ENCODE measurements at regions of chr20 and their contacts with region 1.

Region 1: DNA sequence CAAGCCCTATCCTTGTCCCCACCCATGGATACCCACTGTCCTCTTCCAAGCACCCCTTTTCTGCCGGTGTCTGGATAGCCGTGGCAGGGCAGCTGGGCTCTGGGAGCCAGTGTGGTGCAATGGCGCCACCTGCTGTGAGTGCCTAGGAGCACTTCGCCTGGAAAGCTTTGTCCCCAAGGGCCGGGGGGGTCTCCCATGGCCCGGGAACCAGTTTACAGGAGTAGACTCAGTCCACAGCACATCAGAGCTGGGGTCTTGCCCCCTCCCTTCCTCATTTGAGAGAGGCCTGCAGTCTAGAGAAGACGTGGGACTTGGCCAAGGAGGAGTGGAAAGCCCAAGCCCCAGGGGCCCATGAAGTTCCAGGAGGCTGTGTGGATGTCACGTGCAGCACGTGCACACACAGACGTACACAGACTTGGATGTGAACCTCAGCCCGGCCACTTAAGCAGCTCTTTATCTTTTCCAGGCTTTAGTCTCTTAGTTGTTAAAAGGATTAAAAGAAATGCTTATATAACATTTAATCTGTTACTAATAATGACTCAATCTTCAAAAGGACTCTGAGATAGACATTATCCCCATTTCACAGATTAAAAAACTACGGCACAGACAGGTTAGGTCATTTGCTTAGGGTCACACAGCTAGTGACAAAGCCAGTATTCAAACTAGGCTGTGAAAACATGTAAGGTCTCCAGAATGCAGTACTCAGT is 40.9 kb upstream of the CDH22 start:
- DNase-seq: peak; percentile 48
- H3K4me3 ChIP-seq: no peak overlapping the region
- H3K27ac ChIP-seq: no peak overlapping the region
- H3K4me1 ChIP-seq: peaks cover 9% of the 10 kb centered on the region
- H3K27me3 ChIP-seq: peaks cover 1 to 4% of the 10 kb centered on the region in 2 experiments
- CTCF ChIP-seq: peak; percentile 74 to 87
- POLR2A ChIP-seq: no peak

Region 2: GRCh38 chr20:46013826-46014516 is 335.2 kb before region 1 on chr20:
- CTCF ChIA-PET with region 1: interaction called, 18 read pairs
- POLR2A ChIA-PET with region 1: no interaction called
- dilution Hi-C with region 1: no loop called
- intact Hi-C with region 1: no loop called
- DNase-seq: peak; percentile 31
- H3K4me3 ChIP-seq: no peak overlapping the region
- H3K27ac ChIP-seq: no peak overlapping the region
- H3K4me1 ChIP-seq: no peaks in the 10 kb centered on the region
- H3K27me3 ChIP-seq: peaks cover 39 to 46% of the 10 kb centered on the region in 2 experiments
- CTCF ChIP-seq: peak; percentile 74 to 85
- POLR2A ChIP-seq: no peak

Region 3: DNA sequence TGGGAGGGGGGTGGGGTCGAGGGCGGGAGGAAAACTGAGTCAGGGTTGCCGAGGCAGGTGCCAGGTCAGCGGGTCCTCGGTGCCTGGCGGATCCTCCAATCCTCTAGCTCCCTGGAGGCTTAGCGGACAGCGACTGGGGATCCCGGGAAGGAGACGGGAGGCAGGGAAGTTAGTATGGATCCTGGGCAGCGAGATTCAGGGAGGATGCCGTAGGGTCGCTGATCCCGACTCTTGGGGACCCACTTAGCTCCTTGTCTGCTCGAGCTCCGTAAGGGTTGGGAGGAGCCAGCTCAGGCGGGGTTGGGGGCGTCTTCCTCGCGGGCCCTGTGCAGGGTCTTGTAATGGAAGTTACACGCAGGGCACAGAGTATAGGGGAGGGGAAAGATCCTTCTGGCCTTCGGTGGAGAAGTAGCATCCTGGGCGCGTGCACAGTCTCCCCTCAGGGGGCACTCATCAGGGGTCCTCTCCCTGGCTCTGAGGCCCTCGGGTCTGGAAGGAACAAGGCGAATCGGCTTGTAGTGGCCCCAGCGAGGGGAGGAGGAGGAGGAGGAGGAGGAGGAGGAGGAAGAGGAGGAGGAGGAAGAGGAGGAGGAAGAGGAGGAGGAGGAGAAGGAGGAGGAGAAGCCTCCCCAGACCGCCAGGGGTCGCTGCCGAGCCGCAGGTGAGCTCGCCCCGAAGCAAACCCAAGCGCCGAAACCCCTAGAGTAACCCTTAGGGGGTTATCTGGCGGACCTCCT is 326.6 kb before region 1 on chr20:
- CTCF ChIA-PET with region 1: interaction called, 10 read pairs
- POLR2A ChIA-PET with region 1: interaction called, 3 read pairs
- dilution Hi-C with region 1: no loop called
- intact Hi-C with region 1: loop called (anchors 2 kb)
- DNase-seq: no peak
- H3K4me3 ChIP-seq: no peak overlapping the region
- H3K27ac ChIP-seq: no peak overlapping the region
- H3K4me1 ChIP-seq: no peaks in the 10 kb centered on the region
- H3K27me3 ChIP-seq: peaks cover 10 to 22% of the 10 kb centered on the region in 2 experiments
- CTCF ChIP-seq: peak; percentile 53 to 77
- POLR2A ChIP-seq: no peak

Region 4: DNA sequence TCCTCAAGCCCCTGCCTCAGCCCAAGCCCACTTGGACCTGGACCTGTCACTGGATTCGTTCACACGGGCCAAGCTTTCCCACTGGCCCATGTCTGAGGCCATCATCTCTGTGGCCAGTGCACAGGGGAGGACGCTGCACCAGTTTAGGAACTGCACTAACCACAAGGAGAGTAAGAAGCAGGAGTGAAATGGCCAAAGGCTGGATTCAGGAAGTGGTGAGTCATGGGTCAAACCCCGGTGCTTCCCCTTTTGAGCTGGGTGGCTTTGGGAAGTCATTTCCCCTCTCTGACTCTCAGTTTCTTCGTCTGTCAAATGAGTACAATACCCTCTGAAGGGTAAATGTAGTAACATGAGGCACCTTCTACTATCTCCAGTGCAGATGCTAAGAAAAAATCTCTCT is 143.2 kb before region 1 on chr20:
- CTCF ChIA-PET with region 1: no interaction called
- POLR2A ChIA-PET with region 1: no interaction called
- dilution Hi-C with region 1: no loop called
- intact Hi-C with region 1: loop called (anchors 5 kb)
- DNase-seq: peak; percentile 47
- H3K4me3 ChIP-seq: no peak overlapping the region
- H3K27ac ChIP-seq: no peak overlapping the region
- H3K4me1 ChIP-seq: peaks cover 15% of the 10 kb centered on the region
- H3K27me3 ChIP-seq: peaks cover 11 to 16% of the 10 kb centered on the region in 2 experiments
- CTCF ChIP-seq: no peak
- POLR2A ChIP-seq: no peak

Region 5: GRCh38 chr20:46363800-46364634 is 14.8 kb after region 1 on chr20:
- CTCF ChIA-PET with region 1: interaction called, 8 read pairs
- POLR2A ChIA-PET with region 1: no interaction called
- dilution Hi-C with region 1: no loop called
- intact Hi-C with region 1: loop called (anchors 1 kb)
- DNase-seq: peak; percentile 88
- H3K4me3 ChIP-seq: peak overlapping the region; percentile 49 to 90 (median 67)
- H3K27ac ChIP-seq: peak overlapping the region; percentile 94
- H3K4me1 ChIP-seq: peaks cover 8% of the 10 kb centered on the region
- H3K27me3 ChIP-seq: no peaks in the 10 kb centered on the region
- CTCF ChIP-seq: no peak
- POLR2A ChIP-seq: peak; percentile 68

Region 6: DNA sequence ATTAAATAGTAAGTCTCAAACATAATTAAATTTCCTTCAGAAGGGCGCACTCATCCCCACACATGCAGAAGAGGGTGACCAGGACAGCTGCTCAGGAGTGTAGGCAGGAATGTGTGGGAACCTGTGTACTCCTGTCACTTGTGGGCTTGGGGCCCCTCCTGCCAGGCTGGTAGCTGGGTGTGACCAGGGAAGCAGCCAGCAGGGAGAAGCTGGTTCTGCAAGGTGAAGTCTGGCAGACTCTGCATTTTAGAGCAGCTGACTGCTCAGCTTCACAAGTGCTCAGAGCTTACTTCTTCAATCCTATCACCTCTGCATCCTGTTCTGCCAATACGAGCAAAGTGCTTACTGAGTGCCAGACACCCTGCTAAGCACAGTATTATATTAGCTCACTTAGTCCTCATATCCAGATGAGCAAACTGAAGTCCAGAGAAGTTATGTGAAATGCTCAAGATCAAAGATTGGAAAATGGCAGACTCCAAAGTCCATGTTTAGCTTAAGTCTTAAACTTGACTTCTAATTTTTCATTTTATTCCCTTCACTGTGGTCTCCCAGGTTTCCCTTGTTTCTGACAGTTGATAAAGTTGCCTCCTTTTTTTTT is 29.3 kb after region 1 on chr20:
- CTCF ChIA-PET with region 1: no interaction called
- POLR2A ChIA-PET with region 1: no interaction called
- dilution Hi-C with region 1: no loop called
- intact Hi-C with region 1: no loop called
- DNase-seq: no peak
- H3K4me3 ChIP-seq: no peak overlapping the region
- H3K27ac ChIP-seq: no peak overlapping the region
- H3K4me1 ChIP-seq: no peaks in the 10 kb centered on the region
- H3K27me3 ChIP-seq: no peaks in the 10 kb centered on the region
- CTCF ChIP-seq: no peak
- POLR2A ChIP-seq: no peak

Region 7: GRCh38 chr20:47521059-47521808 is 1172.0 kb after region 1 on chr20:
- CTCF ChIA-PET with region 1: no interaction called
- POLR2A ChIA-PET with region 1: no interaction called
- dilution Hi-C with region 1: no loop called
- intact Hi-C with region 1: no loop called
- DNase-seq: no peak
- H3K4me3 ChIP-seq: no peak overlapping the region
- H3K27ac ChIP-seq: no peak overlapping the region
- H3K4me1 ChIP-seq: peaks cover 7% of the 10 kb centered on the region
- H3K27me3 ChIP-seq: no peaks in the 10 kb centered on the region
- CTCF ChIP-seq: peak in 1 of 2 donors; percentile 8
- POLR2A ChIP-seq: no peak